Left cardiac atrium (tissue), 4 donors: ENCODE measurements at regions of chr19 and their contacts with region 1.

Region 1: GRCh38 chr19:20565321-20566018 is at the start of gene ZNF737:
- DNase-seq: peak; percentile 98
- ATAC-seq: peak; percentile 97 to 99
- total RNA-seq, gene ZNF737: 4.5 to 5.3 TPM

Region 2: GRCh38 chr19:20359933-20360720 is 205.3 kb before region 1 on chr19:
- intact Hi-C with region 1: no loop called
- DNase-seq: no peak
- ATAC-seq: no peak

Region 3: GRCh38 chr19:20964798-20965197 is 399.3 kb after region 1 on chr19:
- intact Hi-C with region 1: no loop called
- DNase-seq: no peak
- ATAC-seq: no peak

Region 4: DNA sequence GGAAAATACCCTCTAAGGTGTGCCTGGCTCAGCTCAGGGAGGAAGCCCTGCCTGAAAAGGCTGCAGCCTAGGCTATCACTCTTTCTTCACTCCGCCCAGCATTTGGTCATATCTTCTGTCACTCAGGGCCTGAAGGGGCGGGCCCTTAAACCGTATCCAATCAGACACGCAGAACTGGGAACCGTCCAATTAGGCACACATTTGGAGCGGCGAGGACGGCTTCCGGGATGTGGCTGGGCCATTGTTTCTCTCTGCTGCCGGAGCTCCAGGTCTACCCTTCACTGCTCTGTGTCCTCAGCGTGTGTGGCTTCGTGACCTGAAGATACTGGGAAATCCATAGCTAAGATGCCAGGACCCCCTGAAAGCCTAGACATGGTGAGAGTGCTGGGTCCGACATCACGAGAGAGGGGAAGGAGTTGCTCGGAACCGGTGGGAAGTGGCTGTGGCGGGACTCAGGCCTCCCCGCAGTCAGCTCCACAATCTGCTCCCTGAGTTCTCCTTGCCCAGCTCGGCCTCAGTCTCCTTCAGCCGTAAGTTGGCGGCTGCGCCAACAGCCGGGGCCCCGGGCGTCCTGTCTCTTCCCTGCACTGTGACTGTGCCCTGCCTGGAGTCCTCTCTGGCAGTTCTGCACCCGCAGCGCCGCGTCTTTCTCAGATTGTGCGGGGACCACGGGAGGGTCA is 831.6 kb after region 1 on chr19 and contains the start of gene ZNF493:
- intact Hi-C with region 1: loop called in 1 of 2 experiments (anchors 10 kb)
- DNase-seq: peak; percentile 96
- ATAC-seq: peak; percentile 100
- total RNA-seq, gene ZNF493: 11.5 to 11.8 TPM